Gastrocnemius medialis (tissue), 4 donors: ENCODE measurements at regions of chr13 and their contacts with region 1.

Region 1: GRCh38 chr13:96020155-96020575 is 33.0 kb downstream of the UGGT2 start:
- DNase-seq: peak in 1 of 2 donors; percentile 35
- ATAC-seq: peak; percentile 92 to 96
- H3K4me3 ChIP-seq: no peak overlapping the region
- H3K27ac ChIP-seq: no peak overlapping the region
- H3K4me1 ChIP-seq: peaks cover 0 to 2% of the 10 kb centered on the region in 2 donors
- H3K27me3 ChIP-seq: no peaks in the 10 kb centered on the region
- CTCF ChIP-seq: peak; percentile 42 to 63 (median 56)
- POLR2A ChIP-seq: no peak

Region 2: GRCh38 chr13:96229356-96229755 is 209.2 kb after region 1 on chr13:
- in situ Hi-C with region 1: no loop called
- intact Hi-C with region 1: loop called (anchors 2 kb)
- DNase-seq: no peak
- ATAC-seq: peak in 1 of 2 donors; percentile 81
- H3K4me3 ChIP-seq: no peak overlapping the region
- H3K27ac ChIP-seq: no peak overlapping the region
- H3K4me1 ChIP-seq: no peaks in the 10 kb centered on the region
- H3K27me3 ChIP-seq: no peaks in the 10 kb centered on the region
- CTCF ChIP-seq: peak in 2 of 5 experiments; percentile 35 to 43
- POLR2A ChIP-seq: no peak

Region 3: DNA sequence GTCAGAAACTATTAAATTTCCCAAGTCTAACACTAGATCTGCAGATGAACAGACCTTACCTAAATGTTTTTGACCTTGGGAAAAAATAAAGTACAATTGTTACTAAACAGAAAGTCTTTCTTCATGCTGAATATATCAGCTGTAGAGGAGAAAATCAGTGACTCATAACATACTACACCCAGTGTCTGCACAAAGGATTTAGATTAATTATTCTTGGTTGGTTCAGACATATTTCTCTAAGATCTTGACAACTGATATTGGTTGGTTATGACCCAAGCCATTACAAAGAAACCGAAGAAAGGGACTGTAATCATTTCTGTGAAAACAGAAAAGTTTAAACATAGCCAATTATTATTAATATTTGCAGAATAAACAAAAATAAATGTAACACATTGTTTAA is 294.8 kb after region 1 on chr13:
- in situ Hi-C with region 1: no loop called
- intact Hi-C with region 1: no loop called
- DNase-seq: no peak
- ATAC-seq: no peak
- H3K4me3 ChIP-seq: no peak overlapping the region
- H3K27ac ChIP-seq: no peak overlapping the region
- H3K4me1 ChIP-seq: no peaks in the 10 kb centered on the region
- H3K27me3 ChIP-seq: no peaks in the 10 kb centered on the region
- CTCF ChIP-seq: no peak
- POLR2A ChIP-seq: no peak

Region 4: DNA sequence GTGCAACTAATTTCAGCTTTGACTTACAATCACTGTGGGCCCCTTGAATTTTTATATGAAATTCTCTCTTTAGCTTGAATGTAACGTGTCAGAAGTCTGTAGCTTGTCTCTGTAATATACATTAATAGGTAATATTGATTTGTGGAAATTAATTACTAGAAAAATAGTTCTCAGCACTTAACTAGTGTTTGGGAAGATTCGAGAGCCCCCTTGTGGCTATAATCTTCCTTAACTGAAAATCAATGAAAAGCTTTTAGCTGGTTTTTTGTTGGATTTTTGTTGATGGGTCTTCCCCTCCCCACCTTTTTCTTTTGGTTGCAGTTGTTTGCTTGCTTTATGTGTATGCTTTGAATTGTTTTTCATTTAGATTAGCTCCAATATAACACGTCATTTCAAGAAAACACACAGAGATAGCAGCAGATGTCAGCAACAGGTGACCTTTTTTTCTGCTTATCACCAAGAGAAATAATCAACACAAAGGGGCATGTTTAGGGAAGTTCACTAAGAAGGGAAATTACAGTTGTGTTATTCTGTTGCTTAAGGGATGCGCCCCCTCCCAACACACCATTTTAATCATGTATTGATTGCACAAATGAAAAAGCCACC is 797.3 kb after region 1 on chr13:
- in situ Hi-C with region 1: loop called in 1 of 4 experiments (anchors 25 kb)
- intact Hi-C with region 1: loop called (anchors 1 kb)
- DNase-seq: no peak
- ATAC-seq: no peak
- H3K4me3 ChIP-seq: no peak overlapping the region
- H3K27ac ChIP-seq: no peak overlapping the region
- H3K4me1 ChIP-seq: peaks cover 0 to 4% of the 10 kb centered on the region in 2 donors
- H3K27me3 ChIP-seq: no peaks in the 10 kb centered on the region
- CTCF ChIP-seq: peak in 4 of 5 experiments; percentile 23 to 52 (median 48)
- POLR2A ChIP-seq: no peak

Region 5: DNA sequence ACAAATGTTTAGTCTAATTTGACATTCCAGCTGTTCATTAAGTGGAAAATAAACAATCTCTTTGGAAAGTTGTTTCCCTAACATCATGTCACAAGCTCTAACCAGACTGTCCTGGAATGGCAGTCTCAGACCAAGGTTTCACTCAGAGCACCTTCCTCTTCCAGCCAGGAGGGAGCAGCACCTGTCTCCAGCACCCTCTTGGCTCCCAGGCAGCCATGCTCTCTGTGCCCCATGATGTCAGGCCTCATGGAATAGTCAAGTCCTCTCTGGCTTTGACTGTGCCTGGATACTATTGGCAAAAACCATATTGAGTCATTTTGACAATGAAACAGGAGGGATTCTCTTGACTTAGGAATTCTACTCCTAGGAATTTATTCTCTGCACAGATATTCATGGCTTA is 802.7 kb after region 1 on chr13:
- in situ Hi-C with region 1: loop called in 1 of 4 experiments (anchors 25 kb)
- intact Hi-C with region 1: no loop called
- DNase-seq: peak in 1 of 2 donors; percentile 41
- ATAC-seq: peak; percentile 42 to 53
- H3K4me3 ChIP-seq: no peak overlapping the region
- H3K27ac ChIP-seq: peak overlapping the region in 1 of 4 donors; percentile 8
- H3K4me1 ChIP-seq: no peaks in the 10 kb centered on the region
- H3K27me3 ChIP-seq: no peaks in the 10 kb centered on the region
- CTCF ChIP-seq: peak in 1 of 5 experiments; percentile 18
- POLR2A ChIP-seq: no peak

Region 6: GRCh38 chr13:96958286-96958891 is 938.2 kb after region 1 on chr13:
- in situ Hi-C with region 1: loop called in 2 of 4 experiments (anchors 5 to 25 kb)
- intact Hi-C with region 1: loop called (anchors 5 kb)
- DNase-seq: no peak
- ATAC-seq: no peak
- H3K4me3 ChIP-seq: no peak overlapping the region
- H3K27ac ChIP-seq: no peak overlapping the region
- H3K4me1 ChIP-seq: no peaks in the 10 kb centered on the region
- H3K27me3 ChIP-seq: no peaks in the 10 kb centered on the region
- CTCF ChIP-seq: peak in 3 of 5 experiments; percentile 46 to 65 (median 58)
- POLR2A ChIP-seq: no peak

Region 7: GRCh38 chr13:97026531-97027161 is 1006.5 kb after region 1 on chr13:
- in situ Hi-C with region 1: no loop called
- intact Hi-C with region 1: loop called (anchors 5 kb)
- DNase-seq: no peak
- ATAC-seq: no peak
- H3K4me3 ChIP-seq: no peak overlapping the region
- H3K27ac ChIP-seq: peak overlapping the region in 1 of 4 donors; percentile 13
- H3K4me1 ChIP-seq: peaks cover 0 to 9% of the 10 kb centered on the region in 2 donors
- H3K27me3 ChIP-seq: no peaks in the 10 kb centered on the region
- CTCF ChIP-seq: no peak
- POLR2A ChIP-seq: no peak